K562 (cell line): ENCODE measurements at regions of chr9 and their contacts with region 1.

Region 1: GRCh38 chr9:18208154-18209059 is 265.5 kb upstream of the ADAMTSL1 start:
- DNase-seq: no peak
- ATAC-seq: no peak
- H3K4me3 ChIP-seq: no peak overlapping the region
- H3K27ac ChIP-seq: no peak overlapping the region
- H3K4me1 ChIP-seq: no peaks in the 10 kb centered on the region
- H3K27me3 ChIP-seq: no peaks in the 10 kb centered on the region
- CTCF ChIP-seq: no peak
- EP300 ChIP-seq: no peak
- POLR2A ChIP-seq: no peak
- RAD21 ChIP-seq: no peak

Region 2: GRCh38 chr9:17810728-17811571 is 397.5 kb before region 1 on chr9:
- CTCF ChIA-PET with region 1: interaction called, 4 read pairs
- POLR2A ChIA-PET with region 1: no interaction called
- in situ Hi-C with region 1: no loop called
- intact Hi-C with region 1: loop called (anchors 5 kb)
- DNase-seq: peak; percentile 15 to 50 (median 38)
- ATAC-seq: no peak
- H3K4me3 ChIP-seq: no peak overlapping the region
- H3K27ac ChIP-seq: no peak overlapping the region
- H3K4me1 ChIP-seq: no peaks in the 10 kb centered on the region
- H3K27me3 ChIP-seq: no peaks in the 10 kb centered on the region
- CTCF ChIP-seq: peak; percentile 37 to 67 (median 50); a peak in 4 of 6 replicates
- EP300 ChIP-seq: no peak
- POLR2A ChIP-seq: no peak
- RAD21 ChIP-seq: peak; percentile 54 to 65